Dendritic cell treated with granulocyte-macrophage colony-stimulating factor and Interleukin-4, amounts not matched to agents 40 ng/mL and 50 ng/mL, for 4 days (primary cell): ENCODE measurements at regions of chr17 and their contacts with region 1.

Region 1: GRCh38 chr17:58249270-58250133 is 11.1 kb downstream of the LPO start:
- H3K4me3 Mint-ChIP-seq: peak overlapping the region; percentile 90
- H3K27ac Mint-ChIP-seq: peak overlapping the region; percentile 66
- H3K4me1 Mint-ChIP-seq: peaks cover 30% of the 10 kb centered on the region
- H3K27me3 Mint-ChIP-seq: peaks cover 76% of the 10 kb centered on the region

Region 2: GRCh38 chr17:57629470-57629869 is 620.0 kb before region 1 on chr17:
- intact Hi-C with region 1: no loop called
- H3K4me3 Mint-ChIP-seq: no peak overlapping the region
- H3K27ac Mint-ChIP-seq: peak overlapping the region; percentile 77
- H3K4me1 Mint-ChIP-seq: peaks cover 68% of the 10 kb centered on the region
- H3K27me3 Mint-ChIP-seq: peaks cover under 1% of the 10 kb centered on the region

Region 3: DNA sequence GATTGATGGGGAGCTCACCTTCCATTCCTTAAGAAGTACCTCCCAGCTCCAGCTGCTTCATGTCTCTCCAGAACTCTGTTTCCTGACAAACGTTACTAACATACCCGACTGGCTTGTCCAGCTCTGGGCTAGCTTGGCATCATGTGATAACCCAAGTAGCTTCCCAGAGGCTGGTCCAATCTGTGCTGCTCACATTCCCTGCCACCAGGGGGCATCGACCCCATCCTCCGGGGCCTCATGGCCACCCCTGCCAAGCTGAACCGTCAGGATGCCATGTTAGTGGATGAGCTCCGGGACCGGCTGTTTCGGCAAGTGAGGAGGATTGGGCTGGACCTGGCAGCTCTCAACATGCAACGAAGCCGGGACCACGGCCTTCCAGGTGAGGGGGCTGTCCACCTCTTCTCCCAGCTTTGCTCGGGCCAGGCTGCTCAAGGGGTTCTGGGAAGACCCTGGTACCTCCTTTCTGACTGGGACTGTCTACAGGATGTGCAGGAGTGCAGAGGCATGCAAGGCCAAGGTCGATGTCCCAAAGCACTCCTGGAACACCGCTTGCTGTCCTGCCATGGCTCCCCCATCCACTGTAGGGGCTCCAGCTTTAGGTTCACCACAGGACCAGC is 49.4 kb before region 1 on chr17:
- intact Hi-C with region 1: loop called (anchors 1 kb)
- H3K4me3 Mint-ChIP-seq: no peak overlapping the region
- H3K27ac Mint-ChIP-seq: no peak overlapping the region
- H3K4me1 Mint-ChIP-seq: no peaks in the 10 kb centered on the region
- H3K27me3 Mint-ChIP-seq: peaks cover 38% of the 10 kb centered on the region

Region 4: GRCh38 chr17:58219001-58219788 is 30.3 kb before region 1 on chr17 and contains the start of gene MKS1:
- intact Hi-C with region 1: loop called (anchors 1 kb)
- H3K4me3 Mint-ChIP-seq: peak within 1 kb of the TSS; percentile 90
- H3K27ac Mint-ChIP-seq: peak within 1 kb of the TSS; percentile 94
- H3K4me1 Mint-ChIP-seq: peaks cover 18% of the 10 kb centered on the region
- H3K27me3 Mint-ChIP-seq: no peaks in the 10 kb centered on the region

Region 5: GRCh38 chr17:58267347-58268324 is 18.1 kb after region 1 on chr17:
- intact Hi-C with region 1: no loop called
- H3K4me3 Mint-ChIP-seq: no peak overlapping the region
- H3K27ac Mint-ChIP-seq: peak overlapping the region; percentile 14
- H3K4me1 Mint-ChIP-seq: peaks cover 61% of the 10 kb centered on the region
- H3K27me3 Mint-ChIP-seq: peaks cover 28% of the 10 kb centered on the region